ENCODE measurements at regions of chrX and their contacts with region 1.

Region 1: GRCh38 chrX:46180258-46180687 is 364.9 kb downstream of the ZNF674 start:
- ATAC-seq: peak in 5 of 8 experiments; percentile 27 to 54 (median 41)
- H3K4me3 ChIP-seq: no peak overlapping the region
- H3K27ac ChIP-seq: no peak overlapping the region
- H3K4me1 ChIP-seq: no peaks in the 10 kb centered on the region

Region 2: GRCh38 chrX:46059316-46059715 is 121.0 kb before region 1 on chrX:
- in situ Hi-C with region 1: no loop called
- ATAC-seq: no peak
- H3K4me3 ChIP-seq: no peak overlapping the region
- H3K27ac ChIP-seq: no peak overlapping the region
- H3K4me1 ChIP-seq: no peaks in the 10 kb centered on the region

Region 3: DNA sequence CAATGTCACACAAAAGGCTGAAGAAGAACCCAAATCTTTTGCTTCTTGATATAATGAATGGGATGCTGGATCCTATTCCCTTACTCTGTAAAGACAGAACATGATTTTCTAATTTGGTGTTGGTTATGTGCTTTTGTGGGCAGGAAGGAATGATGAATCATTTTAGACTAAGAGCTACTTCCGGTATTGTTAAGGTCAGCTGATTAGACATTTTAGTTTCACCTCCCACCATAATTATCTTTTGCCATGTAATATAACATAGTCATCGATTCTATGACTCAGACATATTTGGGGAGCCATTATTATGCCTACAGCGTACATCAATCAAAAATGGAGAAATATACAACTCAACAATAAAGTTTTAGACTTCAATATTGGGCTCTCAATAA is 99.6 kb after region 1 on chrX:
- in situ Hi-C with region 1: loop called in 1 of 9 experiments (anchors 25 kb)
- ATAC-seq: no peak
- H3K4me3 ChIP-seq: no peak overlapping the region
- H3K27ac ChIP-seq: no peak overlapping the region
- H3K4me1 ChIP-seq: no peaks in the 10 kb centered on the region

Region 4: DNA sequence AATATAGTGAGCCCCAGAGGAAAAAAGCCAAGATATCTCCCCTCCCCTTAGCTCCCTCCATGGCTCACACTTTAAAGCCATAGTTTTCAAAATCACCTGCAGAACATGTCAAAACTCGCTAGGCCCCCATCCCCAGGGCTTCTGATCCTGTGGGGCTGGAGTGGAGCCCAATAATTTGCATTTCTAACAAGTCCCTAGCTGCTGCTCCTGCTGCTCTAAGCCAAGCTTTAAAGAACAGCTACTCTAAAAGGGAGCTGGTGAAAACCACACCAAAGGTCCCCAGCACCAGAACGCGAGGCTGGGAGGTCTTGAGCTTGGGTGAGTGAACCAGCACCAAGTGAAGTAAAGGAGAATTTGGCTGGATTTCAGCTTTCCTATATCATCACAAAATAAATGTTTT is 127.8 kb after region 1 on chrX:
- in situ Hi-C with region 1: no loop called
- ATAC-seq: no peak
- H3K4me3 ChIP-seq: no peak overlapping the region
- H3K27ac ChIP-seq: no peak overlapping the region
- H3K4me1 ChIP-seq: no peaks in the 10 kb centered on the region

Region 5: GRCh38 chrX:46477435-46477834 is 297.2 kb after region 1 on chrX:
- in situ Hi-C with region 1: no loop called
- ATAC-seq: no peak
- H3K4me3 ChIP-seq: no peak overlapping the region
- H3K27ac ChIP-seq: no peak overlapping the region
- H3K4me1 ChIP-seq: no peaks in the 10 kb centered on the region